Natural killer cell (primary cell): ENCODE measurements at regions of chr10 and their contacts with region 1.

Region 1: DNA sequence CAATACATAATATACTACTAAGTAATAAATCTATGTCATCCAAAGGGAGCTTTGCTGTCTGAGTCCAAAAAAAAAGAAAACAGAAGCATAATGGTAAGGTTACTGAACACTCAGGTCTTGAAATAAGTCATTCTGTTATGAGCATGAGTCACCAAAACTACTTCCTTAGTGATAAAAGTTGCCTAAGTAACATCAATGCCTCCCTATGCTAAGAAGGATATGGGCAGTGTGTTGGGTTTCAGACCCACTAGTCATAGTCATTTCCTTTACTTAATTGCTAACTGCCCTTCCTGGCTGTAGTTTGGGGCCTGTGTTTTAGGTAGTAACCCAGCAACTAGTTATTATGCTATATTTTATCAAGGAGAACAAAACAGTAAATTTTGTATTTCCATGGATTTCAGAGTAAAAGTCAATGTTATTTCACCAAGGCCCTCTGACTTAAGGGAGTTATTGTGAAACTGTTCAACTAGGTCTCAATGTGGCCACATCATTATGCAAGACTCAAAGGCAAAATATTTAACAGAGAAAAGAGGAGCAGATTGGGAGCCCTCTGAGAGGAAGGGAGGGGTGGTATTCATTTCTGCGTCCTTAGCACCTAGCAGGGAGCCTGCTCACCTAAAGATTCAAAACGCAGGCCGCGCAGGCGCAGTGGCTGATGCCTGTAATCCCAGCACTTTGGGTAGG is 11.7 kb upstream of the VIM start:
- DNase-seq: peak in 1 of 2 donors; percentile 65
- ATAC-seq: peak; percentile 92 to 98 (median 96)
- H3K4me3 ChIP-seq: no peak overlapping the region
- H3K4me3 Mint-ChIP-seq: peak overlapping the region; percentile 40
- H3K27ac ChIP-seq: peak overlapping the region; percentile 73
- H3K27ac Mint-ChIP-seq: peak overlapping the region; percentile 91 to 97
- H3K4me1 ChIP-seq: peaks cover 13% of the 10 kb centered on the region
- H3K4me1 Mint-ChIP-seq: peaks cover 13 to 19% of the 10 kb centered on the region in 2 donors
- H3K27me3 ChIP-seq: no peaks in the 10 kb centered on the region
- H3K27me3 Mint-ChIP-seq: no peaks in the 10 kb centered on the region
- CTCF ChIP-seq: no peak

Region 2: GRCh38 chr10:16965740-16966447 is 250.5 kb before region 1 on chr10:
- intact Hi-C with region 1: no loop called
- DNase-seq: no peak
- ATAC-seq: no peak
- H3K4me3 ChIP-seq: no peak overlapping the region
- H3K4me3 Mint-ChIP-seq: no peak overlapping the region
- H3K27ac ChIP-seq: no peak overlapping the region
- H3K27ac Mint-ChIP-seq: no peak overlapping the region
- H3K4me1 ChIP-seq: no peaks in the 10 kb centered on the region
- H3K4me1 Mint-ChIP-seq: no peaks in the 10 kb centered on the region
- H3K27me3 ChIP-seq: no peaks in the 10 kb centered on the region
- H3K27me3 Mint-ChIP-seq: peaks cover 0 to 4% of the 10 kb centered on the region in 2 donors
- CTCF ChIP-seq: no peak

Region 3: DNA sequence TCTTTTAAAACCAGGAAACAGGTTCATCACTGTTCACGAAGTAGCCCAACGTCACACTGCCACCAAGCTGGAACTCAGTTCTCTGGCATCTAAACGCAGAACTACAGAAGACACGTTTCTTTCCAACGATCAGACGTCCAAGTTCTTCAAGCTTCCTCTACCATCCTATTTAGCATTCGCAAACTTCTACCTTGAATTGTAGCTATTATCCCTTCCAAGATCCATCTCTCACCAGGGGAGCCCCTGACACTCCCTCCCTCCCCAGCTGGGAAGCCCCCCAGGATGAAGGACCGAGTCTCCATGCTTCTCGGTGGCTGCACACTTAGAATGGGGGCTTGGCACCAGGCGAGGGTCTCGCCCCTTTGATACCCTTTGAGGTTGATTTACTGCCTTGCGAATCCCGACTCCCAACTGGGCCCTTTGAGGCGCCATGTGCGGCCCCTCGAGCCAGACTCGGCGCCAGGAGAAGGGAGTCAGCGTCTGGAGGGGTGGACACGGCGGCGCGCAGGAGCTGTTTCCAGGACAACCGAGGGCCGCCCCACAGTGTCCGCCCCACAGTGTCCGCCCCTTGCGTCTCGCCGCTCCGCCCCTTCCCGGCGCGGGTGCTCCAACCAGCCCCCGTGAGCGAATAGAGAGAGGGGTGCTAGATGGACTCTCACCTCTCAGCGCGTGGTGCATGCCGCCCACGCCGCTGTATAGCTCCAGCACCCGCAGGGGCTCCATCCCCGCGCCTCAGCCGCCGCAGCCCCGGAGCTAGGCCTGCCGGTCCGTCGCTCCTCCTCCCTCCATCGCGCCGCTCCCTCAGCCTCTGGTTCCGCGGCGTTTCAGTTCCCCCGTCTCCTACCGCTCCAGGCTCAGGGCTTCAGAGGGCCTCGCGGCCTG is 15.2 kb before region 1 on chr10 and contains the start of gene TRDMT1:
- intact Hi-C with region 1: loop called (anchors 2 kb)
- DNase-seq: peak; percentile 79 to 86
- ATAC-seq: peak; percentile 88 to 96 (median 90)
- H3K4me3 ChIP-seq: peak within 1 kb of the TSS; percentile 87
- H3K4me3 Mint-ChIP-seq: peak within 1 kb of the TSS; percentile 94
- H3K27ac ChIP-seq: peak within 1 kb of the TSS; percentile 87
- H3K27ac Mint-ChIP-seq: peak within 1 kb of the TSS; percentile 91 to 97
- H3K4me1 ChIP-seq: peaks cover 18% of the 10 kb centered on the region
- H3K4me1 Mint-ChIP-seq: peaks cover 28 to 33% of the 10 kb centered on the region in 2 donors
- H3K27me3 ChIP-seq: no peaks in the 10 kb centered on the region
- H3K27me3 Mint-ChIP-seq: no peaks in the 10 kb centered on the region
- CTCF ChIP-seq: no peak
- total RNA-seq, gene TRDMT1: 11.0 to 21.8 (median 14.4) TPM

Region 4: GRCh38 chr10:17409170-17409733 is 192.9 kb after region 1 on chr10:
- intact Hi-C with region 1: no loop called
- DNase-seq: peak in 1 of 2 donors; percentile 68
- ATAC-seq: peak; percentile 70 to 80 (median 75)
- H3K4me3 ChIP-seq: no peak overlapping the region
- H3K4me3 Mint-ChIP-seq: no peak overlapping the region
- H3K27ac ChIP-seq: no peak overlapping the region
- H3K27ac Mint-ChIP-seq: peak overlapping the region in 1 of 2 donors; percentile 79
- H3K4me1 ChIP-seq: peaks cover 5% of the 10 kb centered on the region
- H3K4me1 Mint-ChIP-seq: peaks cover 26 to 31% of the 10 kb centered on the region in 2 donors
- H3K27me3 ChIP-seq: no peaks in the 10 kb centered on the region
- H3K27me3 Mint-ChIP-seq: no peaks in the 10 kb centered on the region
- CTCF ChIP-seq: no peak